Vagina (tissue), 2 donors: ENCODE measurements at regions of chr2 and their contacts with region 1.

Region 1: DNA sequence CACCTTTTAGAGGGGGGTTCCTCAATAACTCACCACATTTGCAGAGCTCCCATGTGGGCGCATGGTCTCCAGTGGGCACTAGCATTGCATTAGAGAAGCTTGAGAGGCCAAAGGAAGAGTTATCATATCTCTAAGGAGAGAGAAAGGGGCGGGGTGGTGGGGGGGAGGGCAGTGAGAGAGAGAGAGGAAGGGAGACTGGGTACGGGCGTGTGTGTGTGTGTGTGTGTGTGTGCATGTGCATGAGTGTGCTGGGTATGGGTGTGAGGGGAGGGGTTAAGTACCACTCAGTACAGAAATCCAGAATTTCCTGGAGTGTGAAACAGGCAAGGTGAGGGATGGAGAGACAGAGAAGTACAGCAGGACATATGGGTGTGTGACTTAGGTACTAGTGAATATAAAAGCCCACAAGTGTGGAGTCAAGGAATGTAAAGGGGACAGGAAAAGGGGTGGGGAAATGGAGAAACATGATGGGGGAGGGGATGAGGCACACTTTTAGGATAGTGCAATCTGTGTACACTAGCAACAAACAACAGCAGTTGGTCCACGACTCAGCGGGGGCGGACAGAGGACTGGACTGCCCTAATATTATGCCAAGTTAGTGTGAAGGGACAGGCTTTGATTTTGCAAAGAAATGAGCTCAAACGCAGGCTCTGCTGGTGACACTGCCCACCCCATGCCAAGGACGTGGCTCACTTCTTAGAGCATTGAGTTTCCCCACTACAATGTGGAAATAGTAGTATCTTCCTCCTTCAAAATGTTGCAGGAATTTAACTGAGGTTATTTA is 91.3 kb downstream of the SPRED2 start:
- DNase-seq: no peak
- H3K4me3 ChIP-seq: no peak overlapping the region
- H3K27ac ChIP-seq: no peak overlapping the region
- H3K4me1 ChIP-seq: peaks cover 17% of the 10 kb centered on the region
- H3K27me3 ChIP-seq: no peaks in the 10 kb centered on the region
- CTCF ChIP-seq: no peak
- POLR2A ChIP-seq: no peak

Region 2: DNA sequence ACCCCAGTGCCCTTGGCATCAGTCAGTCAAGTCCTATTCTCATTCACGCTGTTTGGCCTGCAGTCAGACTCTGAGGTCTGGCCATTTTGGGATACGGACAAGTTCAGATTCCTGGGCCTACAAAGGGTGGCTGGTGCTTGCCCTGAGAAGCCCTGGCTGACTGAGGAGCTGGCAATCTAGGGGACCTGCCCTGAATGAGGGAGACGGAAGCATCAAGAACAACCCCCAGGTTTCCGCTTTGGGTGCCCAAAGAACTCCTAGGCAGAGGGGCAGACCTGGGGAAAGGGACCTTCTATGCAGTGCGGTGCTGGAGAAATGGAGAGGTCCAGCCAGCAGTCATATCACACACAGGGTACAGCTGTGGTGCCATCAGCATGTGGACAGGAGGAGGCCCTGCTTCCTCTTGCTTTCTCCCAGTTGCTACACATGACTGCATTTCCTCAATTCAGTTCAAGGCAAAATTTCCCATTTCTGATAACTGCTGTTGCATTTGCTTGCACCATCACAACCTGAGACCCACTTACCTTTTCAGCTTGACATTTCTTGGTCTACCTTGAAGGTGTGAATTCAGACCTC is 958.0 kb before region 1 on chr2:
- intact Hi-C with region 1: no loop called
- DNase-seq: peak; percentile 40 to 64
- H3K4me3 ChIP-seq: no peak overlapping the region
- H3K27ac ChIP-seq: no peak overlapping the region
- H3K4me1 ChIP-seq: no peaks in the 10 kb centered on the region
- H3K27me3 ChIP-seq: no peaks in the 10 kb centered on the region
- CTCF ChIP-seq: no peak
- POLR2A ChIP-seq: no peak

Region 3: GRCh38 chr2:65363879-65364666 is 23.0 kb after region 1 on chr2:
- intact Hi-C with region 1: loop called (anchors 1 kb)
- DNase-seq: no peak
- H3K4me3 ChIP-seq: no peak overlapping the region
- H3K27ac ChIP-seq: no peak overlapping the region
- H3K4me1 ChIP-seq: peaks cover 67% of the 10 kb centered on the region
- H3K27me3 ChIP-seq: no peaks in the 10 kb centered on the region
- CTCF ChIP-seq: no peak
- POLR2A ChIP-seq: no peak